ENCODE measurements at regions of chr10 and their contacts with region 1.

Region 1: DNA sequence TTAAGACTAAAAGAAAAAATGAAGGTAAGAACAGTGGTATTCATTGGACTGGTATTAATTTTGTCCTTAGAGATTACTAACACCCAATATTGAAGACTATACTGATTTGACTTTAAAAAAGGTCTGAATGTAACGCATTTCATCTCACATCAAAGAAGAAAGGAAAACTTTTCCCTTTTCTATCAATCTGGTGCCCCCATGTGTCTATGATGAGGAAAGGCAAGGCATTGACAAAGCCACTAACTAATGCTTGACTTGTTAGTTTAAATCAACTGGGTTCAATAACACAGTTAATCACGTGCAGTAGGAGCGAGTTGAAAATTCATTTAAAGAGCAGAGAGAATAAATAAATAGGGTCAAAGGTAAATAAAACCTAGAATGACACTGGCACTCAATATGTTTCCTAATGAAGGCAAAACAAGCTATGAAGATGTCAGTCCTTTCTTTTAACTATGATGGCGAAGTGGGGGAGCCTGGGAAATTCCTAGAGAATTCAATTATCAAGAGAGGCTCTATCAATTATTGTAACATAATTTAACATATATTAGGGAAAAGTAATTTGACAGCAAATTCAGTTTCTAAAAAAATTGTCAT is 180.9 kb downstream of the ANK3 start:
- DNase-seq: no peak
- ATAC-seq: peak; percentile 43
- H3K4me3 ChIP-seq: no peak overlapping the region
- H3K4me1 ChIP-seq: peaks cover 6% of the 10 kb centered on the region
- CTCF ChIP-seq: peak; percentile 34

Region 2: DNA sequence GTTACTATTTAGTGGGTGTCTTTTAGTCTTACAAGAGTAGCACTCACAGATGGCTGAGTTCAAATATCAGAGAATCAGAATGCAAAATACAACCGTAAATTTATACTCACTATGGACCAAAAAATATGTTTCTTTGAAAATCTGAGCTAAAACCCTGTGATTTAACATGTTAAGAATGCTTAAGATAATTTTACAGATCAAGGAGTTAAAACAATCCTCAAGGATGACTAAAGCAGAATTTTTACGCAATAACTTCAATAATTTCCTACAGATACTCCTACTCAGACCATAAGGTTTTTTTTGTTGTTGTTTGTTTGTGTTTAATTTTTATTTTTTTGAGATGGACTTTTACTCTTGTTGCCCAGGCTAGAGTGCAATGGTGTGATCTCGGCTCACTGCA is 254.5 kb before region 1 on chr10:
- intact Hi-C with region 1: no loop called
- DNase-seq: no peak
- ATAC-seq: no peak
- H3K4me3 ChIP-seq: no peak overlapping the region
- H3K4me1 ChIP-seq: no peaks in the 10 kb centered on the region
- CTCF ChIP-seq: no peak

Region 3: GRCh38 chr10:60099998-60100747 is 108.6 kb before region 1 on chr10:
- intact Hi-C with region 1: loop called in 1 of 2 experiments (anchors 5 kb)
- DNase-seq: peak in 1 of 3 donors; percentile 49
- ATAC-seq: peak; percentile 82
- H3K4me3 ChIP-seq: no peak overlapping the region
- H3K4me1 ChIP-seq: no peaks in the 10 kb centered on the region
- CTCF ChIP-seq: no peak

Region 4: GRCh38 chr10:60114765-60115586 is 93.8 kb before region 1 on chr10:
- intact Hi-C with region 1: loop called (anchors 5 kb)
- DNase-seq: peak in 1 of 3 donors; percentile 35
- ATAC-seq: peak; percentile 75
- H3K4me3 ChIP-seq: no peak overlapping the region
- H3K4me1 ChIP-seq: no peaks in the 10 kb centered on the region
- CTCF ChIP-seq: no peak

Region 5: GRCh38 chr10:60282771-60283353 is 74.1 kb after region 1 on chr10:
- intact Hi-C with region 1: no loop called
- DNase-seq: peak in 1 of 3 donors; percentile 31
- ATAC-seq: peak; percentile 81
- H3K4me3 ChIP-seq: no peak overlapping the region
- H3K4me1 ChIP-seq: no peaks in the 10 kb centered on the region
- CTCF ChIP-seq: no peak

Region 6: GRCh38 chr10:60323162-60323561 is 114.4 kb after region 1 on chr10:
- intact Hi-C with region 1: no loop called
- DNase-seq: no peak
- ATAC-seq: no peak
- H3K4me3 ChIP-seq: no peak overlapping the region
- H3K4me1 ChIP-seq: no peaks in the 10 kb centered on the region
- CTCF ChIP-seq: no peak

Region 7: GRCh38 chr10:60434418-60435046 is 225.8 kb after region 1 on chr10:
- intact Hi-C with region 1: loop called (anchors 10 kb)
- DNase-seq: peak in 1 of 3 donors; percentile 73
- ATAC-seq: peak; percentile 82
- H3K4me3 ChIP-seq: no peak overlapping the region
- H3K4me1 ChIP-seq: no peaks in the 10 kb centered on the region
- CTCF ChIP-seq: peak; percentile 37

Measured in mucosa of descending colon (tissue), 3 donors.